Activated CD4-positive, alpha-beta T cell treated with anti-CD3 and anti-CD28 coated beads for 36 hours (primary cell): ENCODE measurements at regions of chr10 and their contacts with region 1.

Region 1: GRCh38 chr10:102835007-102835482 is 2.2 kb downstream of the CYP17A1 start:
- DNase-seq: peak; percentile 86
- ATAC-seq: peak; percentile 99
- H3K4me3 Mint-ChIP-seq: no peak overlapping the region
- H3K27ac Mint-ChIP-seq: no peak overlapping the region
- H3K4me1 Mint-ChIP-seq: no peaks in the 10 kb centered on the region
- H3K27me3 Mint-ChIP-seq: peaks cover 2% of the 10 kb centered on the region

Region 2: GRCh38 chr10:102604379-102604960 is 230.6 kb before region 1 on chr10:
- CTCF ChIA-PET with region 1: no interaction called
- POLR2A ChIA-PET with region 1: no interaction called
- intact Hi-C with region 1: no loop called
- DNase-seq: no peak
- ATAC-seq: peak; percentile 30
- H3K4me3 Mint-ChIP-seq: no peak overlapping the region
- H3K27ac Mint-ChIP-seq: no peak overlapping the region
- H3K4me1 Mint-ChIP-seq: peaks cover 9% of the 10 kb centered on the region
- H3K27me3 Mint-ChIP-seq: no peaks in the 10 kb centered on the region

Region 3: DNA sequence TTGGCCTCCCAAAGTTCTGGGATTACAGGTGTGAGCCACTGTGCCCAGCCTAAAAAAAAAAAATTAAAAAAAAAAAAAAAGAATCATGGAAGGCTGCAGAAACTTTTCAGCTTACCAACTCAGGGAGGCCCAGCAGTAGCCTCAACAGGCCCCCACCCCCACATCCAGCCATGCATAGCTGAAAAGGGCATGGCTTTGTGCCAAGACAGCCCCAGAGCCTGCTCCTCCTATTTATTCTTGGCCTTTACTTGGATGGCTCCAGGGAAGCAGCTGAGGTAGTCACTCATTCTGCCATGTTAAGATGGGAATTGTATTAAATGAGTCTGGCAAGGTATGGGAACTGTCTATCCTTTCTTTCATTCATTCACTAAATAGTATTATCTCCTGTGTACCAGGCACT is 69.3 kb after region 1 on chr10:
- CTCF ChIA-PET with region 1: interaction called, 37 read pairs
- POLR2A ChIA-PET with region 1: interaction called, 4 read pairs
- intact Hi-C with region 1: loop called (anchors 1 kb)
- DNase-seq: no peak
- ATAC-seq: no peak
- H3K4me3 Mint-ChIP-seq: no peak overlapping the region
- H3K27ac Mint-ChIP-seq: no peak overlapping the region
- H3K4me1 Mint-ChIP-seq: no peaks in the 10 kb centered on the region
- H3K27me3 Mint-ChIP-seq: no peaks in the 10 kb centered on the region

Region 4: GRCh38 chr10:103244663-103245271 is 409.7 kb after region 1 on chr10:
- CTCF ChIA-PET with region 1: interaction called, 10 read pairs
- POLR2A ChIA-PET with region 1: no interaction called
- intact Hi-C with region 1: loop called (anchors 1 to 2 kb)
- DNase-seq: peak; percentile 80
- ATAC-seq: peak; percentile 81
- H3K4me3 Mint-ChIP-seq: no peak overlapping the region
- H3K27ac Mint-ChIP-seq: no peak overlapping the region
- H3K4me1 Mint-ChIP-seq: peaks cover 12% of the 10 kb centered on the region
- H3K27me3 Mint-ChIP-seq: peaks cover 2% of the 10 kb centered on the region

Region 5: DNA sequence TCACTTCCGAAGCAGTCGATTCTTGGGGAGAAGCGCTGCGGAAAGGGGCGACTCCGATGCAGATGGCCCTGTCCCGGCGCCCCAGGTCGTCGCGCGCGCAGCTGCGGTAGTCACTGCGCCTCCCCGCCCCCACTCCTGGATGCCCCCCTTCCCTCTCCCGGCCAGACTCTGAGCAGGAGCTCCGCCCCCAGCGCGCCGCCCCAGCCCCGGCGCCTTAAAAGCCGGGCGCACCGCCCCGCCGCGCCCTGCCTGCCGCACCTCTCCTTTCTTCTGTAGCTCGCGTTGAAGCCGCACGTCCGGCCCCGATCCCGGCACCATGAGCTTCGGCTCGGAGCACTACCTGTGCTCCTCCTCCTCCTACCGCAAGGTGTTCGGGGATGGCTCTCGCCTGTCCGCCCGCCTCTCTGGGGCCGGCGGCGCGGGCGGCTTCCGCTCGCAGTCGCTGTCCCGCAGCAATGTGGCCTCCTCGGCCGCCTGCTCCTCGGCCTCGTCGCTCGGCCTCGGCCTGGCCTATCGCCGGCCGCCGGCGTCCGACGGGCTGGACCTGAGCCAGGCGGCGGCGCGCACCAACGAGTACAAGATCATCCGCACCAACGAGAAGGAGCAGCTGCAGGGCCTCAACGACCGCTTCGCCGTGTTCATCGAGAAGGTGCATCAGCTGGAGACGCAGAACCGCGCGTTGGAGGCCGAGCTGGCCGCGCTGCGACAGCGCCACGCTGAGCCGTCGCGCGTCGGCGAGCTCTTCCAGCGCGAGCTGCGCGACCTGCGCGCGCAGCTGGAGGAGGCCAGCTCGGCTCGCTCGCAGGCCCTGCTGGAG is 442.1 kb after region 1 on chr10 and contains the start of gene INA:
- CTCF ChIA-PET with region 1: no interaction called
- POLR2A ChIA-PET with region 1: no interaction called
- intact Hi-C with region 1: no loop called
- DNase-seq: peak; percentile 66
- ATAC-seq: peak; percentile 91
- H3K4me3 Mint-ChIP-seq: peak within 1 kb of the TSS; percentile 51
- H3K27ac Mint-ChIP-seq: no peak within 1 kb of the TSS
- H3K4me1 Mint-ChIP-seq: peaks cover 8% of the 10 kb centered on the region
- H3K27me3 Mint-ChIP-seq: peaks cover 55% of the 10 kb centered on the region
- total RNA-seq, gene INA: 0.32 to 0.35 TPM

Region 6: GRCh38 chr10:103333925-103334520 is 499.0 kb after region 1 on chr10:
- CTCF ChIA-PET with region 1: no interaction called
- POLR2A ChIA-PET with region 1: no interaction called
- intact Hi-C with region 1: loop called in 1 of 2 experiments (anchors 2 kb)
- DNase-seq: no peak
- ATAC-seq: no peak
- H3K4me3 Mint-ChIP-seq: no peak overlapping the region
- H3K27ac Mint-ChIP-seq: no peak overlapping the region
- H3K4me1 Mint-ChIP-seq: no peaks in the 10 kb centered on the region
- H3K27me3 Mint-ChIP-seq: no peaks in the 10 kb centered on the region

Region 7: GRCh38 chr10:103481974-103482531 is 647.0 kb after region 1 on chr10:
- CTCF ChIA-PET with region 1: no interaction called
- POLR2A ChIA-PET with region 1: no interaction called
- intact Hi-C with region 1: loop called in 1 of 2 experiments (anchors 10 kb)
- DNase-seq: no peak
- ATAC-seq: peak; percentile 69
- H3K4me3 Mint-ChIP-seq: no peak overlapping the region
- H3K27ac Mint-ChIP-seq: no peak overlapping the region
- H3K4me1 Mint-ChIP-seq: no peaks in the 10 kb centered on the region
- H3K27me3 Mint-ChIP-seq: no peaks in the 10 kb centered on the region